Activated CD4-positive, alpha-beta T cell treated with anti-CD3 and anti-CD28 coated beads for 36 hours (primary cell): ENCODE measurements at regions of chr7 and their contacts with region 1.

Region 1: DNA sequence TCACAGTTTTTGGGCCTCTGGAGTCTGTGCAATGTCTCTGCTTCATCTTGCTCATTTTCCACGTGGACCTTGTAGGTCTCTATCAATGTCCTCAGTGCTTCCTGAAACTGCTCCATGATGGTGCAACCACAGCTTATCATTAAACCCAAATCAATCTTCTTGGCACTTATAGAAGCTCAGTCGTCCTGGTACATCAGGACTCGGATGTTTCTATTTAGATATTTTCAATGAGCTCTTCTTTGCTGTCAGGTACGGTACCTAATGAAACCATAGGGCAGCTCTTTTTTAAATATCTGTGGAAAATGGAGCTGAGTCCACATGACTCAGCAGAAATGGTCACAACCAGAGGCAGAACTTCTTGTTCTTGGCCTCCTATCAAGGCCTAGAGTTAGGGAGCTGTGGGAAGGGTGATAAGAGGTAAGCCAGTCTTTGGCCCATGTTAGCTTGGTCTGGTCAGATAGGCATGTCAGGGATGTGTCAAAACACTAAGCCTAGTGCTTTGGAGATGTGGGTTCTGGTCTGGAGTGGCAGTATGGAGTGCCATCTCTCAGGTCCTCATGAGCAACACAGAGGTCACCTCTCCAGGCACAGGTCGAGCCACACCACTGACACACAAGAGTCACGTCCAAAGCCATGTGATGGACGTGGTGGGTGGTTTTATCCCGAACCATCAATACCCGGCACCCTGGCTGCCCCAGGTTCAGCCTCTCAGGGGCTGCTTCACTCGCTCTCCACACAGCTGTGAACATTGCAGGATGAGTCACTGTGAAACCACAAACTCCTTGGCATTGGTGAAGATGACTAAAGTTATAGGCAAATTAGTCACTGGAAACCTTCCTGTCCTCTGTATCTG is 87.0 kb downstream of the TBXAS1 start:
- DNase-seq: peak; percentile 83
- ATAC-seq: peak; percentile 95
- H3K4me3 Mint-ChIP-seq: peak overlapping the region; percentile 35
- H3K27ac Mint-ChIP-seq: peak overlapping the region; percentile 52
- H3K4me1 Mint-ChIP-seq: peaks cover 25% of the 10 kb centered on the region
- H3K27me3 Mint-ChIP-seq: peaks cover 3% of the 10 kb centered on the region

Region 2: DNA sequence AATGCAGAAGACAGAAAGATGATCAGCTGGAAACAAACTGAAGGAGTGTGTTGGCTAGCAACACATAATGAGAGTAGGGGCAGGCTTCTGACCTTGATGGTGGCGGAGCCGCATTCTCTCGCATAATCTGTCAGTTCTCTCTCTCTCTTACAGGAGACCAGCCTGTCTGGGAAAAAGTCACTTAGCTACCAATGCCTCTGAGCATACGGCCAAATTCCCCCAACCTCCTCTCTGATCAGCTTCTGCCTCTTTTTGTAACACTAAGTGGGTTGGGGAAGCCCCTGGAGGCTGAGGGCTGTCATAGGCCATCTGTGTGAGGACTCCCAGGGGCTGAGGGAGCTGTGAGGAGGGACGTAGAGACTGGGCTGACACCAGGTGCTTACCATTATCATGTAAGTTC is 242.9 kb before region 1 on chr7:
- CTCF ChIA-PET with region 1: no interaction called
- POLR2A ChIA-PET with region 1: no interaction called
- intact Hi-C with region 1: loop called in 1 of 2 experiments (anchors 2 kb)
- DNase-seq: peak; percentile 75
- ATAC-seq: peak; percentile 89
- H3K4me3 Mint-ChIP-seq: peak overlapping the region; percentile 3
- H3K27ac Mint-ChIP-seq: peak overlapping the region; percentile 88
- H3K4me1 Mint-ChIP-seq: peaks cover 56% of the 10 kb centered on the region
- H3K27me3 Mint-ChIP-seq: no peaks in the 10 kb centered on the region

Region 3: DNA sequence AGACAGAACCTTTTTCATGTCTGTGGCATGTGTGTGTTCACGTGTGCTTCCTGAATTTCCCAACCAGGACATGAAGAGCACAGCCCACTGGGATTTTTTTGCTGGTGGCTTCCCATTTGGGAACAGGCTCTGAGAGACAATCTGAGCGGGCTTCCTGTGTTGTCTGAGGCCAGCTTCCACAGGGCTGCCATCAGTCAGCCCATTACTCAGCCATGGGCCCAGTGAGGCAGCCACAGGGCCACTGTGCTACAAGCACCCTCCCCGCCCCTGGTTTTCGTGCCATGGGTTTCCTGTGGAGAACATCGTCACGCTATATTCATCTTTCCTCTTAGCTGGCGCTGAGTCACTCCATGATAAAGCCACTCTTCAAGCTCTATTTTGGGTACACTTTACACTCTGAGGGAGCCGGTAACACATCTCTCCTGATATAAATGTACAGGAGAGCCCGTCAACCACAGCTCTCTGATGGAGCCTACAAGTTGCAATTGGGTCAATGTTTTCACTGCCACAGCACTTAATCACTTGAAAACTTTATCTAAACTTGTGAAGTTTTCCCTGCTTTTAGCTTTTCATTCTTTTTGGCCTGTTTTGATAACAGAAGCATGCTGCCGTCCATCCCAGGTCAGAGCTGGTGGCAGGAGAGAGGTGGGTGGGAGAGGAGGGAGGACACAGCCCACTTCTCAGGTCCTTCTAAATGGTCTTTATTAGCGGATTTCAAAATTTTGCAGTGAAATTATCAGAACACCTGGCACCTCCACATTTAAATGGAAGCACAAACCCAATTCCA is 235.2 kb before region 1 on chr7:
- CTCF ChIA-PET with region 1: interaction called, 3 read pairs
- POLR2A ChIA-PET with region 1: interaction called, 3 read pairs
- intact Hi-C with region 1: loop called (anchors 2 kb)
- DNase-seq: peak; percentile 94
- ATAC-seq: peak; percentile 73
- H3K4me3 Mint-ChIP-seq: peak overlapping the region; percentile 68
- H3K27ac Mint-ChIP-seq: peak overlapping the region; percentile 98
- H3K4me1 Mint-ChIP-seq: peaks cover 53% of the 10 kb centered on the region
- H3K27me3 Mint-ChIP-seq: no peaks in the 10 kb centered on the region

Region 4: GRCh38 chr7:139930286-139930965 is 14.3 kb after region 1 on chr7:
- CTCF ChIA-PET with region 1: interaction called, 4 read pairs
- POLR2A ChIA-PET with region 1: interaction called, 4 read pairs
- intact Hi-C with region 1: loop called in 1 of 2 experiments (anchors 1 kb)
- DNase-seq: no peak
- ATAC-seq: no peak
- H3K4me3 Mint-ChIP-seq: no peak overlapping the region
- H3K27ac Mint-ChIP-seq: no peak overlapping the region
- H3K4me1 Mint-ChIP-seq: peaks cover 17% of the 10 kb centered on the region
- H3K27me3 Mint-ChIP-seq: no peaks in the 10 kb centered on the region